GM12878 (cell line): ENCODE measurements at regions of chr16 and their contacts with region 1.

Region 1: DNA sequence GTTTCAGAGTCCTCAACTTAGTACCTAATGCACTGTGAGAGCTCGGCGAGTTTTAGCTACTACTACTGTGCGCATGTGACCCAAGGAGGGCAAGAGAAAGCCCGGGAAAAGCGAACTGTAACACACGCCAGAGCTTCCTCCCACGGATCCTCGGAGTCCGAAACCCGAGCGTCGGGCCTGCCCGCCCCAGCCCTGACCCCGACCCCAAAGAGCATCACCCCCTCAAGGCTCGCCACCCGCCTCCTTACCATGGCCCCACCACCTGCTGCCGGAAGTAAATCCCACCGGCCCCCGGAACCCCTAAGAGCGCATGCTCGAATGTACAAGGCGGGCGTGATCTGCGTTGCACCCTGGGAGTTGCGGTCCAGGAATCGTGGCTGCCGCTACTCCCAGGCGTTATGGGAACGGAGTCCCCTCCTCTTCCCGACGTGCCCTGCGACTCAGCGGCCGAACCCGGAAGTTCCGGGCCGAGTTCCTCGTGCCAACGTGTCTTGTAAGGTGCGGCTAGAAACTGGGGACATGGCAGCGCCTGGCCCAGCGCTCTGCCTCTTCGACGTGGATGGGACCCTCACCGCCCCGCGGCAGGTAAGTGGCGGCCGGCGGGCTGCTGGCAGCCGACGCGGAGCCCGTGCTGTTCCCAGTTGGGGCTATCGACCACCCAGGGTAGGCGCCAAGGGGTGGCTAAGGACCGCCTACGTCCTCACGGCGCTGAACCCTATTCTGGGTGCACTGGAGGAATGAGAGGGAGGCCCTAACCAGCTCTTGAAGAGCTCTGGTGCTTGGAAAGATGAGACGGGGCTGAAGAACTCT is at the starts of genes PMM2 and TMEM186:
- DNase-seq: peak; percentile 92
- ATAC-seq: peak; percentile 95
- H3K4me3 ChIP-seq: peak within 1 kb of the TSS; percentile 96
- H3K27ac ChIP-seq: peak within 1 kb of the TSS; percentile 84
- H3K4me1 ChIP-seq: peaks cover 10% of the 10 kb centered on the region
- H3K27me3 ChIP-seq: no peaks in the 10 kb centered on the region
- CTCF ChIP-seq: no peak
- EP300 ChIP-seq: no peak
- POLR2A ChIP-seq: peak; percentile 99
- RAD21 ChIP-seq: no peak
- polyA plus RNA-seq, gene PMM2: 22.6 to 24.2 TPM
- polyA plus RNA-seq, gene TMEM186: 27.3 to 28.9 TPM

Region 2: DNA sequence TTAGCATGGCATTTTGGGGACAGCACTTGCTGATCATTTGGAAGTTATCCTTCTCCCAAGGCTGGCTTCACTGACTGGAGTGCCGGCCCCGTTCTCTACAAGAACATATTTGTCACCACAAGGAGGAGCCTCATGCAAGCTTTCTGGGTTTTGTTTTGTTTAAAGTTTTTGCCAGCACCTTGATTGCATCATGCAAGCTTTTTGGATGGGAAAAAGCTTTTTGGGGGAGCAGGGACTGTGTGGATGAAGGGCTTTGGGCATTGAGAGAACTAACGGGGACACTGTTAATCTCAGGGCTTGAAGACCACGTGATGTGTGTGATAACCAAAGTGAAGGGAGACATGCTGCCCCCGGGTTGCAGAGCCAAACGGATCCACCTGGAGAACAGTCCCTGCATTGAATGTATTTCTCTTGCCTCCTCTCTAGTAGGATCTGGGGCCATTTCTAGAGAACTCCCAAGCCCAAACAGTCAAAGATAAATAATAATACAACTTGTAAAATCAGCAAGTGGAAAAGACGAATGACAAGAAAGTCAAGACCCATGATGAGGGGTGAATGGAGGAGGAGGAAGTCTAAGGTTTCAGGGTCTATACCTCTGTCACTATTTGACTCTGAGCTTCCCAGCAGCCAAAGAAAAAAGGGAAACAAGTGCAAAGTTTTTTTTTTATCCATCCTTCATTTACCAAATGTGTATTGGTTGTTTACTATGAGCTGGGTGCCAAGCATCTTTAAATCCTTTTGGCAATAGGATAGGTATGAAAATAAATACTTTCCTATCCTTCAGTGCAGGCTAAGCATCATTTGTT is 224.4 kb before region 1 on chr16:
- CTCF ChIA-PET with region 1: interaction called, 17 read pairs
- POLR2A ChIA-PET with region 1: no interaction called
- RAD21 ChIA-PET with region 1: no interaction called
- SMC1A ChIA-PET with region 1: interaction called, 4 read pairs
- in situ Hi-C with region 1: loop called (anchors 5 kb)
- intact Hi-C with region 1: no loop called
- DNase-seq: no peak
- ATAC-seq: peak; percentile 56
- H3K4me3 ChIP-seq: no peak overlapping the region
- H3K27ac ChIP-seq: no peak overlapping the region
- H3K4me1 ChIP-seq: no peaks in the 10 kb centered on the region
- H3K27me3 ChIP-seq: no peaks in the 10 kb centered on the region; a peak in 2 of 4 replicates
- CTCF ChIP-seq: peak; percentile 39 to 64 (median 54); a peak in 5 of 6 replicates
- EP300 ChIP-seq: no peak
- POLR2A ChIP-seq: no peak
- RAD21 ChIP-seq: peak; percentile 86

Region 3: DNA sequence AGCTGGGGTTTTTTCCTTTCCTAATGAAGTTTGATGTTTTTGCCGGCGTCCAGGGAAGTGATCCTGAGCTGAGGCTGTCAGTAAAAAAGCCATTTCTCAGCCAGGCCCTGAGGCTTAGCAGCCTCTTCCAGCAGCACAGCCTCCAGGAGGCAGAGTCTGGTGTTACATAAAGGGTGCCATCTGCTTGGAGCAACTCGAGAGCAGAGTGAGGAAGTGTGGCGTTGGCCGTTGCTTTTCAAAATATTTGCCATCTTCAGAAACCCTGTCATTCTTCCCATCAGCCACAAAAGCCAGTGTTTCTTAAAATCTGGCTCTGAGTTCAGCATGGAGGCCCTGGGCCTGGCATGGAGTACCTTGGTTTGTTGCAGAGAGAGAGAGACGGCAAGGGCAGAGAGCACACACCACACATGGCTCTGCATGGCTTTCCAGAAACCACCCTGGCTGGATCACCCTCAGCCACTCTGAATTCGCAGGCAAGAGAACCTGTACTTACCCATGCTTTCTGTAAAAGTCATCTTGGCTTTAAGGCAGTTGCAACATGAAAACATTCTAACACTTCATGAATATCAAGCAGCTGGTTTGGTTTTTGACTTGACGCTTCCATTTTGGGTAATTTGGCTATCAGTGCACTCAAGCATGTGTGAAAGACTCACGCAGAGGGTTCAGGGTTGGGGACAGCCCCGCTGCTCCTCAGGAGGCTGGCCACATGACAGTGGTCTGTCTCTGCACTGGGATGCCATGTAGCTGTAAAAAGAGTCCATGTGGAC is 21.1 kb after region 1 on chr16:
- CTCF ChIA-PET with region 1: interaction called, 3 read pairs
- POLR2A ChIA-PET with region 1: interaction called, 7 read pairs
- RAD21 ChIA-PET with region 1: interaction called, 3 read pairs
- SMC1A ChIA-PET with region 1: interaction called, 10 read pairs
- in situ Hi-C with region 1: no loop called
- intact Hi-C with region 1: no loop called
- DNase-seq: peak; percentile 57
- ATAC-seq: peak; percentile 88
- H3K4me3 ChIP-seq: no peak overlapping the region
- H3K27ac ChIP-seq: peak overlapping the region; percentile 66
- H3K4me1 ChIP-seq: peaks cover 18% of the 10 kb centered on the region
- H3K27me3 ChIP-seq: no peaks in the 10 kb centered on the region
- CTCF ChIP-seq: no peak
- EP300 ChIP-seq: peak; percentile 51 to 68; a peak in 1 of 4 replicates
- POLR2A ChIP-seq: no peak
- RAD21 ChIP-seq: no peak

Region 4: DNA sequence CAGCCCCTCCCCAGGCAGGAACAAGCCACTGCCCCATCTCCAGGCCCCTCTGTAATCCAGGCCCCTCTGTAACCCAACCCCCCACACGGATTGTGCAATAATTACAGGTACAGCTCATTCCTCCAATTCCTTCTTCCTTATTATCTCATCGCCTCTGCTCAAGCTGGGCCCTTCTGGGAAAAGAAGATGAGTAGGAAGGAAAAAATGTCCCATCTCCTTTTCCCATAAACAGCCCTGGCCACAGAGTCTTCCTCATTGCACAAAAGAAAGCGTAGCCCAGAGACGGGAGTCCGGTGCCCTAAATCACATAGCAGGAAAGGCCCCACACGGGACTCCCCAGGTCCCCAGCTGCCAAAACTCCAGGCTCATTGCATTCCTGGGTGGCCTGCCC is 80.9 kb after region 1 on chr16:
- CTCF ChIA-PET with region 1: interaction called, 8 read pairs
- POLR2A ChIA-PET with region 1: no interaction called
- RAD21 ChIA-PET with region 1: interaction called, 15 read pairs
- SMC1A ChIA-PET with region 1: interaction called, 9 read pairs
- in situ Hi-C with region 1: no loop called
- intact Hi-C with region 1: no loop called
- DNase-seq: no peak
- ATAC-seq: no peak
- H3K4me3 ChIP-seq: no peak overlapping the region
- H3K27ac ChIP-seq: no peak overlapping the region
- H3K4me1 ChIP-seq: peaks cover 6% of the 10 kb centered on the region
- H3K27me3 ChIP-seq: no peaks in the 10 kb centered on the region
- CTCF ChIP-seq: no peak
- EP300 ChIP-seq: no peak
- POLR2A ChIP-seq: no peak
- RAD21 ChIP-seq: no peak

Region 5: DNA sequence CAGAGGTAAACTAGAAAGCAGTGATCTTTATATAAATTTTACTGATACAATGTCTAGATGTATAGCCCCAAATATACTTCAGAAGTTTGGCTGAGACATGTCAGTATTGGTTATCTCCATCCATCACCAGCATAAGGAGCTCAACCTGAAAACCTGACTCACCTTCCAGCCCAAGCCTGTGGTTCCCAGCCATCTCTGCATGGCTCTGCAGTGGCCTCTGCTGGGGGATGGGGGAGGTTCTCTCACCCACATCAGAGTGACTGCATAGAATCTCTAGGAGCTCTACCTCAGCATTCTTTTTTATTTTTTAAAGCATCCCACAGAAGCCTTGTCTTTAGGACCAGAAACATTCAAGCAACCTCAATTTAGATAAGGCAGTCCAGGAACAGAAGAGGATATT is 138.9 kb after region 1 on chr16:
- CTCF ChIA-PET with region 1: interaction called, 6 read pairs
- POLR2A ChIA-PET with region 1: no interaction called
- RAD21 ChIA-PET with region 1: interaction called, 5 read pairs
- SMC1A ChIA-PET with region 1: interaction called, 3 read pairs
- in situ Hi-C with region 1: no loop called
- intact Hi-C with region 1: loop called (anchors 5 kb)
- DNase-seq: no peak
- ATAC-seq: peak; percentile 92
- H3K4me3 ChIP-seq: no peak overlapping the region
- H3K27ac ChIP-seq: no peak overlapping the region
- H3K4me1 ChIP-seq: peaks cover 50% of the 10 kb centered on the region
- H3K27me3 ChIP-seq: no peaks in the 10 kb centered on the region
- CTCF ChIP-seq: peak; percentile 70 to 84 (median 77)
- EP300 ChIP-seq: no peak
- POLR2A ChIP-seq: no peak
- RAD21 ChIP-seq: peak; percentile 85